ENCODE measurements at regions of chr3 and their contacts with region 1.

Region 1: GRCh38 chr3:117526470-117527079 is 817.0 kb downstream of the TUSC7 start:
- DNase-seq: peak in 1 of 2 donors; percentile 38
- H3K4me3 ChIP-seq: no peak overlapping the region
- H3K27ac ChIP-seq: no peak overlapping the region
- H3K4me1 ChIP-seq: no peaks in the 10 kb centered on the region
- H3K27me3 ChIP-seq: no peaks in the 10 kb centered on the region
- CTCF ChIP-seq: peak; percentile 61 to 64

Region 2: GRCh38 chr3:116770815-116771450 is 755.6 kb before region 1 on chr3:
- intact Hi-C with region 1: loop called (anchors 10 kb)
- DNase-seq: peak; percentile 64 to 68
- H3K4me3 ChIP-seq: no peak overlapping the region
- H3K27ac ChIP-seq: no peak overlapping the region
- H3K4me1 ChIP-seq: no peaks in the 10 kb centered on the region
- H3K27me3 ChIP-seq: no peaks in the 10 kb centered on the region
- CTCF ChIP-seq: peak; percentile 68 to 77

Region 3: GRCh38 chr3:116863822-116864589 is 662.6 kb before region 1 on chr3:
- intact Hi-C with region 1: loop called (anchors 10 kb)
- DNase-seq: no peak
- H3K4me3 ChIP-seq: peak overlapping the region; percentile 11 to 40
- H3K27ac ChIP-seq: no peak overlapping the region
- H3K4me1 ChIP-seq: peaks cover 0 to 9% (median 5%) of the 10 kb centered on the region in 4 donors
- H3K27me3 ChIP-seq: peaks cover 0 to 14% of the 10 kb centered on the region in 2 donors
- CTCF ChIP-seq: peak; percentile 57 to 58

Region 4: GRCh38 chr3:117454254-117454653 is 72.3 kb before region 1 on chr3:
- intact Hi-C with region 1: no loop called
- DNase-seq: no peak
- H3K4me3 ChIP-seq: no peak overlapping the region
- H3K27ac ChIP-seq: no peak overlapping the region
- H3K4me1 ChIP-seq: no peaks in the 10 kb centered on the region
- H3K27me3 ChIP-seq: no peaks in the 10 kb centered on the region
- CTCF ChIP-seq: no peak

Region 5: GRCh38 chr3:117495620-117496019 is 31.0 kb before region 1 on chr3:
- intact Hi-C with region 1: no loop called
- DNase-seq: no peak
- H3K4me3 ChIP-seq: no peak overlapping the region
- H3K27ac ChIP-seq: no peak overlapping the region
- H3K4me1 ChIP-seq: no peaks in the 10 kb centered on the region
- H3K27me3 ChIP-seq: no peaks in the 10 kb centered on the region
- CTCF ChIP-seq: no peak